Posterior vena cava (tissue), 2 donors: ENCODE measurements at regions of chr1 and their contacts with region 1.

Region 1: GRCh38 chr1:95233737-95234500 is at the start of gene RWDD3:
- DNase-seq: peak; percentile 98
- total RNA-seq, gene RWDD3: 17.1 to 17.4 TPM

Region 2: GRCh38 chr1:95084317-95085176 is 149.4 kb before region 1 on chr1:
- intact Hi-C with region 1: loop called in 1 of 2 experiments (anchors 10 kb)
- DNase-seq: no peak

Region 3: DNA sequence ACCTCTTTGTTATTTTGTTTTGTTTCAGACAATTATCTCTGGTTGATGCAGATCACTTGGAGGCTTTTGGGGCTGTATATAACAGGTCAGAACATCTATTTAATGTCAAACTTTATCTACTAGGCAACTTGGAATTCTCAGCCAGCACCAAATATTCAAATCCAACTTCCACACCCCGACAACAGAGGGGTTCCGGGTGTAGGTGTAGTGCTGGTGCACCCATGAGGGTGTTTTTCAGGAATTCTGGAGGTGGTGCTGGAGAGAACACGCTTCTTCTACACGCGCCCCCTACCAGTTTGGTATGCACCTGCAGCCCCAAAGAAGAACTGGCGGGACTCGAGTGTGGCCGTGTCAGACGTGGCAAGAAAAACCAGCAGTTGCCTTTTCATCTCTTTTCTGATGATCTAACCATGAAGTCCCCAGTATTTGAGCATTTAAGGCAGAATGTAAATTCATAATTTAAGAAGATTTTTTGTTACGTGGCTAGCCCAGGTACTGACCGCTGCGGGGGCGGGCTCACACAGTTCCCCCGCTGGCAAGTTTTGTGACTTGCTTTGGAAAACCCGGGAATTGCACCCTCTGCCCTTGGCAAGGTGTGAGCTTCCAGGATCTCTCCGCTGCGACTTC is 117.2 kb before region 1 on chr1:
- intact Hi-C with region 1: loop called in 1 of 2 experiments (anchors 10 kb)
- DNase-seq: no peak

Region 4: GRCh38 chr1:95197616-95198252 is 36.2 kb before region 1 on chr1:
- intact Hi-C with region 1: loop called in 1 of 2 experiments (anchors 1 kb)
- DNase-seq: no peak

Region 5: DNA sequence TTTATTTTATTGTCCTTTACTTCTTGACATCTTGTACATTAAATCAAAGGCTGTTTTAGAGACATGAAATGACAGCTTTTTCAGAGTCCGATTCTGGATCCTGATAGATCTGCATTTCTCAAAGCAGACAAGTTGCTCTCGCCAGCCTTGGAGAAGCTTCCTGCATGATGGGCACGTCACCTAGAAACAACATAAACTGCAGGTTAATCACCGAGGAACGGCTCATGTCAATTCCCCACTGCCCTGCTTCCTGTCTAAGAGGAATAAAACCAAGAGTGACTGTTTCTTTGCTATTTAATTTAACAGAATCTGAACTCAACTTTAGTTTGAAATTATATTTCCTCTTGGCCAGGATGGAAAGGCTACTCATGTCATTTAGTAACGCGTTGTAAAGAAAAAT is 77.1 kb after region 1 on chr1:
- intact Hi-C with region 1: no loop called
- DNase-seq: no peak